ENCODE measurements at regions of chr11 and their contacts with region 1.

Region 1: DNA sequence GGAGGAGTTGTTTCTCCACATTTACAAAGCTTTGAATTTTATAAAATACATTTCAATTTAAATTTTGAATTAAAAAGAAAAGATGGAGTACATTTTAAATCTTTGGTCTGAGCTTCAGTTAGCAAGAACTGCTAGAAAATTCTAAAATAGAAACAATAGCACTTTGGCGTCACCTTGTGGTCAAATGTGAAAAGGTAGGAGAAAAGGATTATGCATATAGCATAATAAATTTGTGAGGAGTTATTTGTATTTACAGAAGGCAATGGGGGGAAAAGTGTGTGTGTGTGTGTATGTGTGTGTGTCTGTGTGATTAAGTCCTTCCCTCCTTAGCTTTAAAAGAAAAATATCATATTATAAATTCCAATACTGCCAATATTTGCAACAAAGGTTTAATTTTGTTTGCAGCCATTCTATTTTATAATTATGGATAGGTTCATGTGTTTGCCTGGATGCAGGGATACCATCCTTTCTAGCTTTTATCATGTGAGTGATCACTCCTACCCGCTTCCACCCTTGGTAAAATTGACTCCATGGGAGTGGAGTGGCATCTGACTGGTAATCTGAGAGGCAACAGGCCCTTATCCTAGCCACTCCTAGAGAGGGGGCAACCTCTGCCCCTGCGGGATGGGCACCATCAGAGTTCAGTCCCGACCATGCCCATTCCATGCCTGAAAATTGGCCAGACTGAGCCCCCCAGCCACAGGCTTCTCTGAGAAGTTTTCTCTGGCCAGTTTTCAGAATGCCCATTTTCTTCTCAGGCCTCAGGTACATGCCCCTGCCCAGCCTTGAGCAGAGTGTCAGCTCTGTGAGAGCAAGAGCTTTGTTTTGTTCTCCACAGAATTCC is 13.6 kb upstream of the LGR4 start:
- DNase-seq: peak in 7 of 9 donors; percentile 32 to 55 (median 51)
- ATAC-seq: peak; percentile 69
- H3K4me3 ChIP-seq: no peak overlapping the region
- H3K4me3 Mint-ChIP-seq: no peak overlapping the region
- H3K27ac ChIP-seq: no peak overlapping the region
- H3K27ac Mint-ChIP-seq: no peak overlapping the region
- H3K4me1 ChIP-seq: no peaks in the 10 kb centered on the region
- H3K4me1 Mint-ChIP-seq: peaks cover 0 to 5% (median 0%) of the 10 kb centered on the region in 7 donors
- H3K27me3 ChIP-seq: no peaks in the 10 kb centered on the region
- H3K27me3 Mint-ChIP-seq: no peaks in the 10 kb centered on the region

Region 2: DNA sequence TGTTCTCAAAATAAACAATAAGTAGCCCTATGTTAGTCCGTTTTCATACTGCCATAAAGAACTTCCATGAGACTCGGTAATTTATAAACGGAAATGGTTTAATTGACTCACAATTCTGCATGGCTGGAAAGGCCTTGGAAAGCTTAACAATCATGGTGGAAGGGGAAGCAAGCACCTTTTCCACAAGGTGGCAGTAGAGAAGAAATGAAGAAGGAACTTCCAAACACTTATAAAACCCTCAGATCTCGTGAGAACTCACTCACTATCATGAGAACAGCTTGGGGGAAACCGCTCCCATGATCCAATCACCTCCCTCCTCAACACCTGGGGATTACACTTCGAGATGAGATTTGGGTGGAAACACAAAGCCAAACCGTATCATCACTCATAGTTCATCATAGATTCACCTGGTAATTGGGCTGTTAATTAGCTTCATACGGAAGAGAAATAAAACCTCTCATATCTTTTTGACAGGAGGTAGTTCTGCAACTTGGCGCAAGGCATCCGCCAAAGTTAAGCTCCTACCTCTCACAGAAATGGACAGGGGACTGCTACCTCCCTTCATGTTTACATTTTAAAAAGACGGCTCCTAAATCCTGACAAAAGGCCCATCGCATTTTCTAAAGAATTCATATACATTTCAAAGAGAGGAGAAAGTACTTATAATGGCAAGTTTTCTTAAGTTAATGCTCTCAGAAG is 963.1 kb before region 1 on chr11:
- CTCF ChIA-PET with region 1: no interaction called
- POLR2A ChIA-PET with region 1: no interaction called
- intact Hi-C with region 1: loop called in 1 of 2 experiments (anchors 5 kb)
- DNase-seq: no peak
- ATAC-seq: no peak
- H3K4me3 ChIP-seq: no peak overlapping the region
- H3K4me3 Mint-ChIP-seq: no peak overlapping the region
- H3K27ac ChIP-seq: no peak overlapping the region
- H3K27ac Mint-ChIP-seq: no peak overlapping the region
- H3K4me1 ChIP-seq: no peaks in the 10 kb centered on the region
- H3K4me1 Mint-ChIP-seq: no peaks in the 10 kb centered on the region
- H3K27me3 ChIP-seq: no peaks in the 10 kb centered on the region
- H3K27me3 Mint-ChIP-seq: no peaks in the 10 kb centered on the region

Region 3: DNA sequence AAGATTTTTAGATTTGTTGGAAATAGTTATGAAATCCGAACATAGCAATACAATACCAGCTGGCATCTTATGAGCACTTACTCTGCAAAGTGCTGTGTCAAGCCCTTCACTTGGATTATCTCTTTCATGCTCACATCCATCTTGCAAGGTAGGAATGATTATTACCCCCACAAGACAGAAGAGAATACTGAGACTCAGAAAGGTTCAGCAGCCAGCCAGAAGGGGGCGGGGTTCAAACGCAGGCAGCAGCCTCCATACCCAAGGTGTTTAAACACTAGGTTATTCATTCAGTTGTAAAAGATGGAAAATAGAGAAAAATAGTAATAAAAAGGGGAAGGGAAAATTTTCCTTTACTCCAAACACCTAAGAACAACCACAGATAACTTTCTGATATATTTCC is 281.6 kb before region 1 on chr11:
- CTCF ChIA-PET with region 1: interaction called, 3 read pairs
- POLR2A ChIA-PET with region 1: no interaction called
- intact Hi-C with region 1: loop called in 1 of 2 experiments (anchors 1 kb)
- DNase-seq: no peak
- ATAC-seq: no peak
- H3K4me3 ChIP-seq: no peak overlapping the region
- H3K4me3 Mint-ChIP-seq: no peak overlapping the region
- H3K27ac ChIP-seq: no peak overlapping the region
- H3K27ac Mint-ChIP-seq: no peak overlapping the region
- H3K4me1 ChIP-seq: no peaks in the 10 kb centered on the region
- H3K4me1 Mint-ChIP-seq: peaks cover 0 to 10% (median 0%) of the 10 kb centered on the region in 7 donors
- H3K27me3 ChIP-seq: no peaks in the 10 kb centered on the region
- H3K27me3 Mint-ChIP-seq: peaks cover 0 to 13% (median 0%) of the 10 kb centered on the region in 5 donors

Region 4: GRCh38 chr11:27497284-27497866 is 11.2 kb after region 1 on chr11:
- CTCF ChIA-PET with region 1: interaction called, 31 read pairs
- POLR2A ChIA-PET with region 1: interaction called, 3 read pairs
- intact Hi-C with region 1: loop called in 1 of 2 experiments (anchors 1 kb)
- DNase-seq: peak in 2 of 9 donors; percentile 13 to 22
- ATAC-seq: peak; percentile 46
- H3K4me3 ChIP-seq: no peak overlapping the region
- H3K4me3 Mint-ChIP-seq: peak overlapping the region in 1 of 10 donors; percentile 32
- H3K27ac ChIP-seq: no peak overlapping the region
- H3K27ac Mint-ChIP-seq: no peak overlapping the region
- H3K4me1 ChIP-seq: peaks cover 9 to 11% of the 10 kb centered on the region in 2 donors
- H3K4me1 Mint-ChIP-seq: peaks cover 12 to 42% (median 30%) of the 10 kb centered on the region in 7 donors
- H3K27me3 ChIP-seq: no peaks in the 10 kb centered on the region
- H3K27me3 Mint-ChIP-seq: no peaks in the 10 kb centered on the region